ENCODE measurements at regions of chr12 and their contacts with region 1.

Region 1: GRCh38 chr12:6533923-6534694 is at the start of gene GAPDH:
- DNase-seq: peak; percentile 85 to 89 (median 88)
- H3K4me3 ChIP-seq: peak within 1 kb of the TSS; percentile 79 to 81
- H3K4me3 Mint-ChIP-seq: peak within 1 kb of the TSS; percentile 90 to 98 (median 94)
- H3K27ac ChIP-seq: peak within 1 kb of the TSS; percentile 86
- H3K27ac Mint-ChIP-seq: peak within 1 kb of the TSS; percentile 88 to 99 (median 99)
- H3K4me1 ChIP-seq: peaks cover 62% of the 10 kb centered on the region
- H3K4me1 Mint-ChIP-seq: peaks cover 30 to 67% (median 45%) of the 10 kb centered on the region in 4 donors
- H3K27me3 ChIP-seq: no peaks in the 10 kb centered on the region
- H3K27me3 Mint-ChIP-seq: no peaks in the 10 kb centered on the region
- total RNA-seq, gene GAPDH: 474 to 495 TPM

Region 2: GRCh38 chr12:6367065-6367968 is 166.8 kb before region 1 on chr12:
- CTCF ChIA-PET with region 1: interaction called, 4 read pairs
- POLR2A ChIA-PET with region 1: interaction called, 10 read pairs
- intact Hi-C with region 1: no loop called
- DNase-seq: peak; percentile 36 to 55 (median 48)
- H3K4me3 ChIP-seq: no peak overlapping the region
- H3K4me3 Mint-ChIP-seq: peak overlapping the region in 1 of 8 donors; percentile 5
- H3K27ac ChIP-seq: no peak overlapping the region
- H3K27ac Mint-ChIP-seq: peak overlapping the region in 5 of 7 donors; percentile 30 to 84 (median 79)
- H3K4me1 ChIP-seq: peaks cover 26% of the 10 kb centered on the region
- H3K4me1 Mint-ChIP-seq: peaks cover 8 to 38% (median 13%) of the 10 kb centered on the region in 4 donors
- H3K27me3 ChIP-seq: no peaks in the 10 kb centered on the region
- H3K27me3 Mint-ChIP-seq: no peaks in the 10 kb centered on the region

Region 3: DNA sequence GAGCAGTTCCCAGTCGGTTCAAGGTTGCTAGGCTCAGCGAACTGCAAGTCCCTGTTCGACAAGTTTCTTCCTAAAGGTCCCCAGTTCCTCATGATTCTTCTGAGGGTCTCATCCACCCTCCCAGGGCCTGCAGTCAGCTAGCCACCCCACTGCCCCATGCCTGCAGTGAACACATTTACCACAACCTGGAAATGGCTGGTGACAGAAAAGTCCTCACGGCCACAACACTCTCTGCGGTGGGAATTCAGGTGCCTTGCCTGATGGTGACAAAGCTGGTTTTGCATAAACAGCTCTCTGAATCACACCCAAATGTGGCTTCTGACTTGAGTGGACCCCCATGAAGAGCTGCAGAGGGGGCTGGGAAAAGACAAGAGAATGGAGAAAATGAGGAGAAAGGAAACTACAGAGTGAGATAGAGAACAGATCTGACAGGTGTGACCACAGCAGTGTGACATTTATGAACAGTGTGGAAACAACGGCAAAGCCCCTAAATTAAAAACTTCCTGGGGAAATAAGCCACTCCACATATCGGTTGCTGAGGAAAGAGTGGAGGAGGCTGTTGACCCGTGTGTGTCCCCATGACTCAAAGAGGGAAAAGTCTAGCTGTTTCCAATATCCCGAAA is 90.6 kb before region 1 on chr12:
- CTCF ChIA-PET with region 1: interaction called, 22 read pairs
- POLR2A ChIA-PET with region 1: interaction called, 19 read pairs
- intact Hi-C with region 1: no loop called
- DNase-seq: no peak
- H3K4me3 ChIP-seq: no peak overlapping the region
- H3K4me3 Mint-ChIP-seq: peak overlapping the region; percentile 83 to 99 (median 96)
- H3K27ac ChIP-seq: peak overlapping the region; percentile 41
- H3K27ac Mint-ChIP-seq: peak overlapping the region; percentile 80 to 99 (median 92)
- H3K4me1 ChIP-seq: peaks cover 37% of the 10 kb centered on the region
- H3K4me1 Mint-ChIP-seq: peaks cover 28 to 64% (median 40%) of the 10 kb centered on the region in 4 donors
- H3K27me3 ChIP-seq: no peaks in the 10 kb centered on the region
- H3K27me3 Mint-ChIP-seq: no peaks in the 10 kb centered on the region

Region 4: GRCh38 chr12:6461401-6462233 is 72.5 kb before region 1 on chr12:
- CTCF ChIA-PET with region 1: interaction called, 134 read pairs
- POLR2A ChIA-PET with region 1: interaction called, 199 read pairs
- intact Hi-C with region 1: no loop called
- DNase-seq: peak; percentile 82 to 96 (median 86)
- H3K4me3 ChIP-seq: peak overlapping the region in 1 of 2 donors; percentile 42
- H3K4me3 Mint-ChIP-seq: peak overlapping the region; percentile 53 to 89 (median 80)
- H3K27ac ChIP-seq: peak overlapping the region; percentile 82
- H3K27ac Mint-ChIP-seq: peak overlapping the region; percentile 90 to 99 (median 98)
- H3K4me1 ChIP-seq: peaks cover 89% of the 10 kb centered on the region
- H3K4me1 Mint-ChIP-seq: peaks cover 65 to 93% (median 80%) of the 10 kb centered on the region in 4 donors
- H3K27me3 ChIP-seq: no peaks in the 10 kb centered on the region
- H3K27me3 Mint-ChIP-seq: no peaks in the 10 kb centered on the region

Region 5: DNA sequence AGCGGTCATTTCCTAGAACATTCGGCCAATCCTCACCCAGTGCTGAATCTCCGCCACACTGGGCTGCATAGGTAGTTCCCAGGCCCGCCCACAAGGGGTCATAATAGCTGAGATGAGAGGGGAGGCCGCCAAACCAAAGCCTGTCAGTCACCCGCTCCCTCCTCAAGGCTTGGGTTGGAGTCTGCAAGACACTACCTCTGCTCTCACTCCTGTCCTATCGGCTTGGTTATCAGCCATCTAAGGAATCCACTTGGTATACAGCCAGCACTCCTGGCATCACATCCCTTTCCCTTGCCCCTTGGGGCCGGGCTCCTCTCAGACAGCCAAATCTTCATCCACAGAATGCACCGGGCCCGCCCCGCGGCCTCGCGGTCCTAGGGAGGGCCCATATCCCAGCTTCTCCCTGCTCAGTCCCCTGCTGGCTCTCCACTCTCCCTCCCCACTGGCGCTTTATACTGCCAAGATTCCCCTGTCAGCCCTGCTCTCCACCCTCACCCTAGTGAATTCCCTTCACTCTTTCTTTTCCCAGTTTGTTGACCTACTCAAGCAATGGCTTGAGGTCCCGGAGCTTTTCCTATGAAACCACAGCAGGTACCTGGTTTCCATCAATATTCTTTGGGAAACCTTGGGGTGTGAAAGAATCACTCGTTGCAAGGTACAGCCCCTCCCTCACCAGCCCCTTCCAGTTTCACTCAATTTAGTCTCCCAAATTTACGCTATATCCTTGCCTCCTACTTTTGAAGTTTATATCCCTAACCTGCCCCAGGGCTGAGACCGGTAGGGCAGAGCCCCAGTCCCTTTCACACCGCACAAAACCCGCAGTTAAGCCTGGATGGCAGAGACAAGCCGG is 20.3 kb after region 1 on chr12:
- CTCF ChIA-PET with region 1: interaction called, 88 read pairs
- POLR2A ChIA-PET with region 1: interaction called, 66 read pairs
- intact Hi-C with region 1: loop called (anchors 2 kb)
- DNase-seq: peak; percentile 60 to 79 (median 63)
- H3K4me3 ChIP-seq: peak overlapping the region; percentile 71 to 73
- H3K4me3 Mint-ChIP-seq: peak overlapping the region; percentile 81 to 96 (median 88)
- H3K27ac ChIP-seq: peak overlapping the region; percentile 48
- H3K27ac Mint-ChIP-seq: peak overlapping the region; percentile 14 to 89 (median 70)
- H3K4me1 ChIP-seq: peaks cover 57% of the 10 kb centered on the region
- H3K4me1 Mint-ChIP-seq: peaks cover 28 to 64% (median 45%) of the 10 kb centered on the region in 4 donors
- H3K27me3 ChIP-seq: no peaks in the 10 kb centered on the region
- H3K27me3 Mint-ChIP-seq: no peaks in the 10 kb centered on the region

Region 6: DNA sequence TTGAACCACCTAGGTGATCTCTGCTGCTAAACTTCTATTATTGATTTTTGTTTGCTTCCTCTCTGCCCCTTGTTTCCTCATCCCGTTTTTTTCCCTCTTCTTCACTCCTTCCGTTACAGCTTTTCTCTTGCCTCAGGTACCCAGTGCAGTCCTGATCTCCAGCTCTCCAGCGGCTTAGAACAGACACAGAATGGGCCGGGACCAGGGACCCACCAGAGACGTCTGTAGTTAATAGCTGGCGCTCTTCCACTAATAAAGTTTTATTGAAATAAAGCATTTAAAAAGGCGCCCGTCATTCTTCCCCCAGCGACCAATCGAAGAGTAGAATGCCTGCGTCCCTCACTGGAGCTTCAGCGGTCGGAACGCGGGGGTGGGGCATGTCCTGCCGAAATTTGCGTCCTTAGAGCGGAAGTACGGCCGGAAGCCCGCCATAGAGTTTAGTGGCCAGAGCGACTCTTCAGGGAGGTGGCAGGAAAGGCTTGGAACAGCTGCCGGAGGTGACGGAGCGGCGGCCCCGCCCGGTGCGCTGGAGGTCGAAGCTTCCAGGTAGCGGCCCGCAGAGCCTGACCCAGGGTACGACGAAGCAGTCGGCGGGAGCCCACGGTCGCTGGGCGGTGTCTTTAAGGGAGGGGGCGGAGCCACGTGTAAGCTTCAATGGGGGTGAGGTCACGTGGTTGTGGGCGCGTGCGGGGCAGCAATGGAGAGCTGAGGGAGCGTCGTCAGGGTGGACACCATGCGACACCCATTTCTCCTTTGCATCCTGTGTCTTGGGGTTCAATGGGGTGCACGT is 189.7 kb after region 1 on chr12 and contains the start of gene COPS7A:
- CTCF ChIA-PET with region 1: no interaction called
- POLR2A ChIA-PET with region 1: interaction called, 10 read pairs
- intact Hi-C with region 1: no loop called
- DNase-seq: peak; percentile 93 to 97 (median 96)
- H3K4me3 ChIP-seq: peak within 1 kb of the TSS; percentile 40 to 64
- H3K4me3 Mint-ChIP-seq: peak within 1 kb of the TSS; percentile 88 to 98 (median 94)
- H3K27ac ChIP-seq: peak within 1 kb of the TSS; percentile 68
- H3K27ac Mint-ChIP-seq: peak within 1 kb of the TSS; percentile 92 to 99 (median 98)
- H3K4me1 ChIP-seq: peaks cover 21% of the 10 kb centered on the region
- H3K4me1 Mint-ChIP-seq: peaks cover 15 to 31% (median 22%) of the 10 kb centered on the region in 4 donors
- H3K27me3 ChIP-seq: no peaks in the 10 kb centered on the region
- H3K27me3 Mint-ChIP-seq: no peaks in the 10 kb centered on the region
- total RNA-seq, gene COPS7A: 36.9 to 37.7 TPM

Measured in CD4-positive, alpha-beta memory T cell (primary cell).